ENCODE measurements at regions of chr13 and their contacts with region 1.

Region 1: GRCh38 chr13:77386880-77387606 is 60.1 kb upstream of the MYCBP2 start:
- H3K4me3 Mint-ChIP-seq: no peak overlapping the region
- H3K27ac Mint-ChIP-seq: peak overlapping the region; percentile 82
- H3K4me1 Mint-ChIP-seq: peaks cover 50% of the 10 kb centered on the region
- H3K27me3 Mint-ChIP-seq: peaks cover 6% of the 10 kb centered on the region

Region 2: DNA sequence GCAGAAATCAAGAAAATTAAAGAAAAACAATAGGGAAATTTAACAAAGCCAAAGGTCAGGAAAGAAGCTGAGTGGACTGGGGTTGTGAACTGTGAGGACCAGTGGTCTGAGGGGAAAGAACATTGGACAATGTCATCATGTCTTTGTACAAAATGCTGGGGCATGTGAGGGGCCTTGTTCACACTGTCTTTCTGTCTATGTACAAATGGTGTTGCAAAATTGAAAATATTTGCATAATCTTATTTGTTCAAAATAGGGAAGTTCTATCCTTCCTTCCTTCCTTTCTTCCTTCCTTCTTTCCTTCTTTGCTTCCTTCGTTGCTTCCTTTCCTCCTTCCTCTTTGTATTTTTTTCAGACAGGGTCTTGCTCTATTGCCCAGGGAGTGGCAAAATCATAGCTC is 69.2 kb after region 1 on chr13:
- intact Hi-C with region 1: loop called (anchors 10 kb)
- H3K4me3 Mint-ChIP-seq: no peak overlapping the region
- H3K27ac Mint-ChIP-seq: peak overlapping the region; percentile 21
- H3K4me1 Mint-ChIP-seq: peaks cover 38% of the 10 kb centered on the region
- H3K27me3 Mint-ChIP-seq: no peaks in the 10 kb centered on the region

Region 3: DNA sequence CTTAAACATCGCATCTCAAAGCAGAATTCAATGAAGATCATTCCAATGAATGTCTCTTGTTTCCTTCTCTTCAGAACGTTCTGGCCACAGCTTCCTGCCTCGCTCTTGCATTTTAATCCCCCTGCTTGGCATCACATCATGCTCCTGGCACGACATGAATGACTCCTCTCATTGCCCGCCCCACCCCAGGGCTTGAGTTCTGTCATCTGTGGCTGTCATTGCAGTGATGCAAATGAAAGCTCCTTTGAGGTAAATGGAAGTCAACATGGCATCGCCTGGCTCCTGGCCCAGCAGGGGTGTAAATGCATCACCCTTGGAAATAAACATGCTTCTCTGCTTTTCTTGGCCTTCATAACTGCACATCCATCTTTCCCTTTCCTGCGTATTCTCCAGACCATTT is 197.1 kb after region 1 on chr13:
- intact Hi-C with region 1: no loop called
- H3K4me3 Mint-ChIP-seq: no peak overlapping the region
- H3K27ac Mint-ChIP-seq: no peak overlapping the region
- H3K4me1 Mint-ChIP-seq: no peaks in the 10 kb centered on the region
- H3K27me3 Mint-ChIP-seq: no peaks in the 10 kb centered on the region

Measured in dendritic cell treated with granulocyte-macrophage colony-stimulating factor and Interleukin-4, amounts not matched to agents 40 ng/mL and 50 ng/mL, for 4 days (primary cell).